Sciatic nerve (tissue), 2 donors: ENCODE measurements at regions of chr11 and their contacts with region 1.

Region 1: GRCh38 chr11:46305295-46305694 is 27.8 kb downstream of the CREB3L1 start:
- DNase-seq: no peak
- ATAC-seq: no peak

Region 2: DNA sequence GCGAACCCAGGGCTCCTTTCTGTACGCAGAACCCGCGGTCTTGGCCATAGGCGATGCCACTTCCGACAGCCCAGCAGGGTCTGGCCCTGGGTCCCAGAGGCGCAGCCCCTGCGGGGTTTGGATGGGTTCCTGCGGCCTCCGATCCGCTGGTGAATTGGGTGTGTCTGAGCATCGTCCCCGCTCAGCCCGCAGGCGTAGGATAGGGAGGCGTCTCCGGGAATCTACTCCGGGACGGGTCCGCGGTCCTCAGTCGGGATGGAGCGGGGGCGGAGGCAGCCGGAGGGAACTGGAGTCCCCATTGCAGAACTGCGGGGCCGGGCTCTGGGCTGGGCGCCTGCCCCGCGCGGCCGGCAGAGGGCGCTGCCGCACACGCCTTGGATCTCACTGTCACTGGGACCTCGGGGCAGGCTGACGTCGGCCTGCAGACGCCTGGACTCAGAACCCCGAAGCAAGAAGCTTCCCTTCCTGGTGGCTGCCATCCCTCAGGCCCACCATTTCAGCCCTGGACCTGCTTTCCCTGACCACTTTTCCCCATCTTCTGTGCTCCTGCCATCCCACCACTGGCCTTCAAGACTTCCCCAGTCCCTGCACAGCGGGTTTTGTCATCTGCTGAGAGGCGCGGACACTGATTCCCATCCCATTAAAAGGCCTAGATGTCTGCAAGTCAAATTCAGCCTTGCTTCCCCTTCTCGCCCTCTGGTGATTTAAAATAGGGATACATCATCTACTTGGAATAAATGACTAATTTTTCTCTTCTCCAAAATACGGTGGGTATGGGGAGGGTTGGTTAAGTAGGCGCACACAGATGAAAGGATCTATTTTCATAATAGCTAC is 66.1 kb before region 1 on chr11:
- intact Hi-C with region 1: loop called (anchors 2 kb)
- DNase-seq: peak; percentile 90
- ATAC-seq: peak; percentile 87

Region 3: DNA sequence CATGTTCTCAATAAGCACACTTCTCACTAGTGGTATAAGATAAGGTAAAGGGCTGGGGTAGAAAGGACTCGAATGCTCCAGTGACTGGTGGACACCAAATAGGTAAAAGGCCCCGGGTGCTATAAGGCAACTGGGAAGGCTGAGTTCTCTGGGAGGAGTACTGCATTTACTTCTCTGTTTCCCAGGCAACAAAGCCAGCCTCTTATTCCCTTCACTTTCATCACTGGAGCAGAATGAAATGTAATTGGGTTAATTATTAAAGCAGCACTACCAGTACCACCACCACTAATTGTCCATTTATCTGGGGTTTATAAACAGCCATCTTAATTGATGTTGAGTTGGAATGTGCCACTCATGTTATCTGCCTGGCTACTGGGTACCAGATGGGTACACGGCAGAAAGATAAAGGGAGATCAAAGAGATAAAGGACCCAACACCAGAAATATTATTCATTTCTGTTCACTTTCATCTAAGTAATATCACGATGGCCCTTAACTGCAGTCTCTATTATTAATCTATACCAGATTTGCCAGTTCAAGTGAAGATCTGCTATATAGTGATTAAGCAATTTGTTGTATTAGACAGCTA is 180.7 kb after region 1 on chr11:
- intact Hi-C with region 1: no loop called
- DNase-seq: no peak
- ATAC-seq: no peak

Region 4: DNA sequence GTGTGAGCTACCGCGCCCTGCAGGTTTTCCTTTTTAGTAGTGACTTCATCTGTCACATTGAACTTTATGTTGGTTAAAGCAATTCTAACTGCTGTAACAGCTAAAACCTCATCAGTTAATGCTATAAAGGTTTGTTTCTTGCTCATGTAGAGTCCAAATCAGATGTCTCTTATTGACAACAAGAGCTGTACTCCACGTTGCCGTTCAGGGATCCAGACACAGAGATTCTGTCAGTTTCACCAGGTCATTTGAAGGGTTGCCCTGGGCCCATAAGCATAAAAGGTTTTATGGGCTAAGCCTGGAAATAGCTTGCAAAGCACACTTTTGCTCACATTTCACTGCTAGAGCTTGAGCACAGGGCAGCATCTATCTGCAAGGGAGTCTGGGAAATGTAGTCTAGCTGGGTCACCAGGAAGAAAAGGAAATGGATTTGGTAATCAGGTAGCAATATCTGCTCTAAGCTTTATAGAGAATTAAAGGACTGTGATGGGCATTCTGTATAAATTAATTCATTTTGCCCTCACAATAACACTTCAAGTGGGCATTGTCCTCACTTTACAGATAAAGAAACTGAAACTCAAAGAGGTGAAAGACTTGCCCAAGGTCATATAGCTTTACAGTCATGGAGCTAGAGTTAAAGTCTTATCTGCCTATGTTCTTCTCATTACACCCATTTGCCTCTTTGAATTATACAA is 1649.9 kb after region 1 on chr11:
- intact Hi-C with region 1: no loop called
- DNase-seq: no peak
- ATAC-seq: no peak